ENCODE measurements at regions of chr3 and their contacts with region 1.

Region 1: GRCh38 chr3:138694287-138695007 is 85.9 kb downstream of the FAIM start:
- DNase-seq: peak; percentile 72
- ATAC-seq: peak; percentile 91
- H3K4me3 ChIP-seq: no peak overlapping the region
- H3K27ac ChIP-seq: peak overlapping the region; percentile 67
- H3K4me1 ChIP-seq: peaks cover 14% of the 10 kb centered on the region
- H3K27me3 ChIP-seq: no peaks in the 10 kb centered on the region
- CTCF ChIP-seq: no peak

Region 2: DNA sequence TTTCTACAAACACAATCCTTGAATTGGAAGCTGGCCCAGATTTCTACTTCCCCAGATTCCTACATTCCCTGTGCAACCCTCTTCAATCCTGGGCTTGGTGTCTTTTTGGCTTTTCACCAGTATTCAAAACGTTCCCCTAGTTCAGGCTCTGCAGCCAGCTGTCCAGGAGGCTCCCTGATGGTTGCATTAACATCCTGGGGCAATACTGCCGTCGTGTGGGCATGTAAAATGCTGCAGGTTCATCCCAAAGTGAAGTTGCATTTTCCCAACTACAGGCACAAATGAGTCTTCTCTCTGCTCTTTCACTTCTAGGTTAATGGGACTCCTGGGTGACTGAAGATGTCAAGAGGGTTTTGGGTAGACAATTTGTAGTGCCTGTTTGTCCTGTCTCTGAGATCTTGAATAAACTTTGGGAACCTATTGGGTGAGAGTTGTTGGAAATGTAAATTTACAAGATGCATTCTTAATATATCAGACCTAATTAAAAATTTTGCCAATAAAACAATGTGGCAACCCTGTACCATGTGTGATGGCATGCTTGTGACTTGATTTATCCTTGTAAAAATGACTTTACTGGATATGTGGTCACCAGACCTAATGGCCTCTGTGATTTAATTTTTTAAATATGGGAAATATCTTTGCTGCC is 901.7 kb before region 1 on chr3:
- CTCF ChIA-PET with region 1: no interaction called
- POLR2A ChIA-PET with region 1: no interaction called
- in situ Hi-C with region 1: no loop called
- intact Hi-C with region 1: no loop called
- DNase-seq: peak; percentile 28
- ATAC-seq: no peak
- H3K4me3 ChIP-seq: no peak overlapping the region
- H3K27ac ChIP-seq: no peak overlapping the region
- H3K4me1 ChIP-seq: no peaks in the 10 kb centered on the region
- H3K27me3 ChIP-seq: peaks cover 10% of the 10 kb centered on the region; the same call in 1 of the 2 replicates
- CTCF ChIP-seq: peak; percentile 82

Region 3: GRCh38 chr3:138594150-138594934 is 100.1 kb before region 1 on chr3 and contains the start of gene CEP70:
- CTCF ChIA-PET with region 1: interaction called, 3 read pairs
- POLR2A ChIA-PET with region 1: interaction called, 4 read pairs
- in situ Hi-C with region 1: no loop called
- intact Hi-C with region 1: loop called (anchors 10 kb)
- DNase-seq: peak; percentile 87
- ATAC-seq: peak; percentile 98
- H3K4me3 ChIP-seq: peak within 1 kb of the TSS; percentile 88 to 93
- H3K27ac ChIP-seq: peak within 1 kb of the TSS; percentile 96
- H3K4me1 ChIP-seq: peaks cover 23% of the 10 kb centered on the region
- H3K27me3 ChIP-seq: no peaks in the 10 kb centered on the region
- CTCF ChIP-seq: peak; percentile 91
- total RNA-seq, gene CEP70: 64.5 TPM

Region 4: DNA sequence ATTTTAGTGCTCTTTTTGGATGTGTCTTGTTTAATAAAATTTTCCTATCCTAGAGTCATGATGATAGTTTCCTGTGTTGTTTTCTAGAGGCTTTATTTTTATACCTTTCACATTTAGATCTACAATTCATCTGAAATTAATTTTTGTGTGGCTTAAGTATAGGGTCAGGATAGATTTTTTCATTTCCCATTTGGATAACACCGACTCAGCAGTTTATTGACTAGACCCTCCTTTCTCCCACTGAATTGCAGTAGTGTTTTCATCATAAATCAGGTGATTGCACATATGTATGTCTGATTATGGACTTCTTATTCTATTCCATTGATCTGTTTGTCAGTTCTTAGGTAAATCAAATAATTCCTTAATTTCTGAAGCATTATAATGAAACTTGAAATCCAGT is 301.3 kb after region 1 on chr3:
- CTCF ChIA-PET with region 1: no interaction called
- POLR2A ChIA-PET with region 1: no interaction called
- in situ Hi-C with region 1: no loop called
- intact Hi-C with region 1: no loop called
- DNase-seq: no peak
- ATAC-seq: no peak
- H3K4me3 ChIP-seq: no peak overlapping the region
- H3K27ac ChIP-seq: no peak overlapping the region
- H3K4me1 ChIP-seq: no peaks in the 10 kb centered on the region
- H3K27me3 ChIP-seq: peaks cover 18% of the 10 kb centered on the region
- CTCF ChIP-seq: no peak

Measured in Panc1 (cell line).